Activated CD8-positive, alpha-beta memory T cell treated with anti-CD3 and anti-CD28 coated beads, Interleukin-2, amount 10 ng/mL, durations not matched to agents 7 days and 5 days (primary cell): ENCODE measurements at regions of chr19 and their contacts with region 1.

Region 1: GRCh38 chr19:10000171-10000826 is 10.0 kb downstream of the COL5A3 start:
- DNase-seq: peak; percentile 72
- ATAC-seq: peak; percentile 42
- H3K4me3 Mint-ChIP-seq: no peak overlapping the region
- H3K27ac Mint-ChIP-seq: no peak overlapping the region
- H3K4me1 Mint-ChIP-seq: peaks cover 10% of the 10 kb centered on the region
- H3K27me3 Mint-ChIP-seq: peaks cover 15% of the 10 kb centered on the region

Region 2: GRCh38 chr19:9934132-9934950 is 66.0 kb before region 1 on chr19:
- CTCF ChIA-PET with region 1: interaction called, 43 read pairs
- DNase-seq: peak; percentile 86
- ATAC-seq: peak; percentile 83
- H3K4me3 Mint-ChIP-seq: no peak overlapping the region
- H3K27ac Mint-ChIP-seq: no peak overlapping the region
- H3K4me1 Mint-ChIP-seq: peaks cover 14% of the 10 kb centered on the region
- H3K27me3 Mint-ChIP-seq: peaks cover 47% of the 10 kb centered on the region

Region 3: GRCh38 chr19:9943744-9944143 is 56.6 kb before region 1 on chr19:
- CTCF ChIA-PET with region 1: interaction called, 10 read pairs
- DNase-seq: no peak
- ATAC-seq: no peak
- H3K4me3 Mint-ChIP-seq: no peak overlapping the region
- H3K27ac Mint-ChIP-seq: no peak overlapping the region
- H3K4me1 Mint-ChIP-seq: no peaks in the 10 kb centered on the region
- H3K27me3 Mint-ChIP-seq: peaks cover 13% of the 10 kb centered on the region

Region 4: DNA sequence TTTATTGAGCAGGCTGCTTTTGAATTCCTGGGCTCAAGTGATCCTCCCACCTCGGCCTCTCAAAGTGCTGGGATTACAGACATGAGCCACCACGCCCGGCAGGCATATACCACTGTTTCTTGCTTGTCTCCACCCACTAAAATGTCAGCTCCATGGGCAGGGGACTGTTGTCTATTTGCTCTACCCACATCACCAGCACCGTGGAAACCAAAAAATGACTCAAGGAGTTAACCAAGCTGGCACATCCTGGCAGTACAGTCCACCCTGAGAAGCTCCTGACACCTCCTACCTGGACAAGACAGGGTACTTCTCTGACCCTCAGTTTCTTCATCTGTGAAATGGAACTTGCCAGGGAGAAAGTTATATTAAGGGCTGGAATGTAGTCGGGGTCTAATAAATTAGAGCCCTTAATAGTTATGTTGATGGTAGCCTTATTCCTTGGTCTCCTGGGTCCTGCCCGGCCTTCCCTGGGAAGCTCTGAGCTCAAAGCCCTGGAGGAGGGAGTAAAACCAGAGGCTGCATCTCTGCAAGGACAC is 26.9 kb after region 1 on chr19:
- CTCF ChIA-PET with region 1: interaction called, 18 read pairs
- DNase-seq: no peak
- ATAC-seq: no peak
- H3K4me3 Mint-ChIP-seq: no peak overlapping the region
- H3K27ac Mint-ChIP-seq: no peak overlapping the region
- H3K4me1 Mint-ChIP-seq: no peaks in the 10 kb centered on the region
- H3K27me3 Mint-ChIP-seq: peaks cover 25% of the 10 kb centered on the region